ENCODE measurements at regions of chr9 and their contacts with region 1.

Region 1: GRCh38 chr9:78118742-78119473 is 87.3 kb upstream of the GNAQ start:
- DNase-seq: no peak
- ATAC-seq: no peak
- H3K4me3 ChIP-seq: no peak overlapping the region
- H3K27ac ChIP-seq: no peak overlapping the region
- H3K4me1 ChIP-seq: no peaks in the 10 kb centered on the region
- H3K27me3 ChIP-seq: no peaks in the 10 kb centered on the region
- CTCF ChIP-seq: no peak

Region 2: GRCh38 chr9:76403352-76403751 is 1715.6 kb before region 1 on chr9:
- intact Hi-C with region 1: loop called in 1 of 2 experiments (anchors 10 kb)
- DNase-seq: no peak
- ATAC-seq: peak in 2 of 4 donors; percentile 37 to 51
- H3K4me3 ChIP-seq: no peak overlapping the region
- H3K27ac ChIP-seq: no peak overlapping the region
- H3K4me1 ChIP-seq: no peaks in the 10 kb centered on the region
- H3K27me3 ChIP-seq: no peaks in the 10 kb centered on the region
- CTCF ChIP-seq: peak; percentile 39